BJ (cell line): ENCODE measurements at regions of chr7 and their contacts with region 1.

Region 1: GRCh38 chr7:35624299-35625186 is 70.4 kb downstream of the HERPUD2 start:
- DNase-seq: no peak
- H3K4me3 ChIP-seq: no peak overlapping the region
- H3K27me3 ChIP-seq: no peaks in the 10 kb centered on the region
- CTCF ChIP-seq: peak; percentile 83

Region 2: GRCh38 chr7:35424869-35425495 is 199.6 kb before region 1 on chr7:
- CTCF ChIA-PET with region 1: interaction called, 16 read pairs
- POLR2A ChIA-PET with region 1: no interaction called
- DNase-seq: no peak
- H3K4me3 ChIP-seq: no peak overlapping the region
- H3K27me3 ChIP-seq: no peaks in the 10 kb centered on the region; the same call in 1 of the 2 replicates
- CTCF ChIP-seq: peak; percentile 83

Region 3: GRCh38 chr7:35596061-35596460 is 28.5 kb before region 1 on chr7:
- CTCF ChIA-PET with region 1: interaction called, 13 read pairs
- POLR2A ChIA-PET with region 1: no interaction called
- DNase-seq: no peak
- H3K4me3 ChIP-seq: no peak overlapping the region
- H3K27me3 ChIP-seq: no peaks in the 10 kb centered on the region
- CTCF ChIP-seq: no peak